A549 (cell line): ENCODE measurements at regions of chr3 and their contacts with region 1.

Region 1: DNA sequence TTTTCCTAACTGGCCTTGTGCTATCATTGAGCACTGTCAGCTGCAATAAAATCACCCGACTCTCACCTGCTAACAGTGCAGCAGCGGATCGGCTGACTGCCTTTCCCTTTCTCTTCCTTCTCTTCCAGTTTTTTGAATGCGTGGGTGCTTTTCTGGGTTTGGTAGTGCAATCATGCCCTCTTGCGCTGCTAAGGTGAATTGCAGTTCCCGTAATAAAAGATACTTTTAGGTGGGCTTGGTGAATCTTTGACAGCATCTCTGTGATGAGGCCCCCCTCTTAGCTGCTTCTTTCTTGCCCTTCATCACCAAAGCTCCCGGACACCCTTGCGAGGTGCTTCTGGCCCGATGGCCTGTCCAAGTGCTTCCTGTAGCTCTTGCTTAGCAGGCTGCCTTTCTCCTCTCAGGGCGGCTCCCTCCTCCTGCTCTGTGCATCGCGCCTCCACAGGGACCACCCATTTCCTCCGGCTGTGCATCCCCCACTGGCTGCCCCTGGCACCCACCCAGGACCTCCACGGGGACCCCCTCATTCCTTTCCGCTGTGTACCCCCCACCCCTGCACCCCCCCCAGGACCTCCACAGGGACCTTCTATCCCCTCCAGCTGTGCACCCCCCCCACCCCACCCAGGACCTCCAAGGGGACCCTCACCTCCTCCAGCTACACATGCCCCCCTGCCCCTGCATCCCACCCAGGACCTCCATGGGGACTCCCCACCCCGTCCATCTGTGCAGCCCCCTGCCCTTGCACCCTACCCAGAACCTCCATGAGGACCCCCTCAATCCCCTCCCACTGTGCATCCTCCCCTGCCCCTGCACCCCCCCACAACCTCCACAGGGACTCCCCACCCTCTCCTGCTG is 50.8 kb upstream of the RPL32 start:
- DNase-seq: peak; percentile 55 to 62
- ATAC-seq: peak in 1 of 2 experiments; percentile 58; a peak in 3 of 6 replicates
- H3K4me3 ChIP-seq: no peak overlapping the region
- H3K27ac ChIP-seq: no peak overlapping the region
- H3K4me1 ChIP-seq: no peaks in the 10 kb centered on the region
- CTCF ChIP-seq: peak; percentile 86
- EP300 ChIP-seq: no peak
- POLR2A ChIP-seq: no peak
- RAD21 ChIP-seq: peak; percentile 92 to 96

Region 2: GRCh38 chr3:12135029-12135657 is 757.1 kb before region 1 on chr3:
- CTCF ChIA-PET with region 1: interaction called, 11 read pairs
- POLR2A ChIA-PET with region 1: no interaction called
- DNase-seq: peak; percentile 64 to 66
- ATAC-seq: peak; percentile 96
- H3K4me3 ChIP-seq: no peak overlapping the region
- H3K27ac ChIP-seq: peak overlapping the region; percentile 0 to 39; a peak in 3 of 6 replicates
- H3K4me1 ChIP-seq: no peaks in the 10 kb centered on the region
- CTCF ChIP-seq: peak; percentile 95
- EP300 ChIP-seq: no peak
- POLR2A ChIP-seq: no peak
- RAD21 ChIP-seq: peak; percentile 98

Region 3: DNA sequence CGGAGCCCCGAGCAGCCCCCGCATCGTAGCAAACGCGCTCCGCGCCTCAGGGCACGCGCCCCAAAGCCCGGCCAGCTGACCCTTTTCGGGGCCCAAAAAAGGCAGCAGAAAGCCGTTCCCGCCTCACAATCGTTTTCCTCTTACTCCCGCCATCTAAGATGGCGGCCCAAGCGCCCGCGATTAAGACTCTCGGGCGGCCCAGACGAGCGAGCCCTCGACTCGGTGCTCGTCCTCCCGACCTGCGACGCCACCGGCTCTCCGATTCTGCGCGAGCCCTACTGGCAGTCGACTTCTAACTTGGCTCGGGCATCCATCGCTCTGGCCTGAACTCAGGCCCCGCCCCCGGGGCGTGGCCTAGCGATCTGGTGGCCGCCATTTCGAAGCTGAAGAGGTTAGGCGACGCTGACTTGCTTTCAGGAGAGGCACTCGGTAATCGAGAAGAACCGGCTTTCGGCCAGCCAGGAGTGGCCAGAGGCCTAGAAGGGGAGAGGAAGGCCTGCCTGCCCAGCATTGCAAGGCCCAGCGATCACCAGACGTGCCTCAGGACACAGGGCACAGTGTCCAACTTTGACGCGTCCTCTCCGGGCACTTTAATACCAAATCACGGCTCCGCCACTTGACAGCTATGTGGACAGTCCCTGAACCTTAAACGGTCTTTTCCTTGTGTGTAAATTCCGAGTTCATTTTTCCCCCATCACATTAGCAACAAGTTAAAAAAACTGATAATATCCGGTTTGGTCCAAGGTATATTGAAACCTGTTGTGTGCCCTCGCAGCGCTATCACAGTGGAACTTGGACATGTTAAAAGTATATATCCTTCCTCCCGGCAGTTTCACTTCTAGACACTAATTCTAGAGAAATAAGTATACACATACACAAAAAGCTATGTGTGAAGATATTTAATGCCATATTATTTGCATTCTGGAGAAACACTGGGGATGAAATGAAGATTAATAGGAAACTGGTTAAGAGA is 228.0 kb before region 1 on chr3 and contains the start of gene RAF1:
- CTCF ChIA-PET with region 1: no interaction called
- POLR2A ChIA-PET with region 1: no interaction called
- DNase-seq: peak; percentile 92 to 98
- ATAC-seq: peak; percentile 90 to 96
- H3K4me3 ChIP-seq: peak within 1 kb of the TSS; percentile 85
- H3K27ac ChIP-seq: peak within 1 kb of the TSS; percentile 97 to 98
- H3K4me1 ChIP-seq: peaks cover 22% of the 10 kb centered on the region; the same call in 2 of the 3 replicates
- CTCF ChIP-seq: no peak
- EP300 ChIP-seq: no peak
- POLR2A ChIP-seq: peak; percentile 78
- RAD21 ChIP-seq: peak in 1 of 2 experiments; percentile 25; a peak in 1 of 5 replicates
- polyA plus RNA-seq, gene RAF1: 94.6 and 109 TPM in 2 replicates

Region 4: GRCh38 chr3:12830785-12831156 is 61.4 kb before region 1 on chr3:
- CTCF ChIA-PET with region 1: interaction called, 15 read pairs
- POLR2A ChIA-PET with region 1: no interaction called
- DNase-seq: no peak
- ATAC-seq: peak; percentile 23 to 39; a peak in 5 of 6 replicates
- H3K4me3 ChIP-seq: no peak overlapping the region
- H3K27ac ChIP-seq: no peak overlapping the region; a peak in 1 of 6 replicates
- H3K4me1 ChIP-seq: peaks cover 24% of the 10 kb centered on the region
- CTCF ChIP-seq: no peak
- EP300 ChIP-seq: no peak
- POLR2A ChIP-seq: no peak
- RAD21 ChIP-seq: no peak

Region 5: DNA sequence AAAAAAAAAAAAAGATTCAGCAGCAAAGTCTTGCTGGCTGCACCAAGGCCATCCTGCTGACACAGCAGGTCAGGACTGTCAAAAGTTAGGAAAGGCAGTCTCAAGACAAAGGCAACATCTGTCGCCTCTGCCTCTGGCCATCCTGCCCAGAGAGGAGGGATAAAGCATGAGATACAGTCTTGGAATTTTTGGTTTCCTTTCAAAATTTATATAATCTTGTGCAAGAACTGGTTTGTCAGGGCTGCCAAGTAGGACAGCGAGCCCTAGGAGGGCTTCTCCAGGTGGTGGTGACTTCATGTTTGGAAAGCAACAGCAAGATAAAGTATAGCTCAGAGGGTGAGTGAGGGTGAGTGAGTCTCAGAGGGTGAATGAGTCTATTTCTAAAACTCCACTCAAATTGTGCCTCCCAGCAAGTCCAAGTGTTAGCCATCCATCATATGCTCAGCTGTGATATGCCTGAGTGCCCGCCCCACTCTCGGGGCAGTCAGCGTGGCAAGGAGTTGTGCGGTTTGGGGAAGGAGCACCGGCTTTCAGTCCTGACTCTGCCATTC is 38.9 kb before region 1 on chr3:
- CTCF ChIA-PET with region 1: interaction called, 11 read pairs
- POLR2A ChIA-PET with region 1: no interaction called
- DNase-seq: no peak
- ATAC-seq: no peak
- H3K4me3 ChIP-seq: no peak overlapping the region
- H3K27ac ChIP-seq: no peak overlapping the region
- H3K4me1 ChIP-seq: no peaks in the 10 kb centered on the region
- CTCF ChIP-seq: no peak
- EP300 ChIP-seq: no peak
- POLR2A ChIP-seq: no peak
- RAD21 ChIP-seq: no peak

Region 6: GRCh38 chr3:12868039-12869034 is 23.9 kb before region 1 on chr3:
- CTCF ChIA-PET with region 1: interaction called, 90 read pairs
- POLR2A ChIA-PET with region 1: no interaction called
- DNase-seq: peak; percentile 85 to 88
- ATAC-seq: peak; percentile 95 to 97
- H3K4me3 ChIP-seq: no peak overlapping the region
- H3K27ac ChIP-seq: no peak overlapping the region
- H3K4me1 ChIP-seq: peaks cover 4% of the 10 kb centered on the region; the same call in 2 of the 3 replicates
- CTCF ChIP-seq: peak; percentile 87
- EP300 ChIP-seq: no peak
- POLR2A ChIP-seq: no peak
- RAD21 ChIP-seq: peak; percentile 80 to 87

Region 7: DNA sequence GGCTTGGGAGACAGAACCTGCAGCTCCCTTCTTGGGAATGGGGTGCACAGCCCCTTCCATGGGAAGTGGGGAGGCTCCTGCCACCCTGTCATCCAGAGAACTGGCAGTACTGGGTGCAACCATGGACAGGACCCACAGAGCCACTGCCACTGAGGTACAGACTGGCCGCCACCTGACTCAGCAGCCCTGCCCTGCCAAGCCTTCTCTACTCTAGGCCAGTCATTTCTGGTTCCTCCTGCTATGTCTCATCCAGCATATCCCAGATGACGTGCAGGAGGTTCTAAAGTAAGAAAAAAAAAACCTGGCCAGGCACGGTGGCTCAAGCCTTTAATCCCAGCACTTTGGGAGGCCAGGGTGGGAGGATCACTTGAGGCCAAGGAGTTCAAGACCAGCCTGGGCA is 26.0 kb after region 1 on chr3:
- CTCF ChIA-PET with region 1: interaction called, 10 read pairs
- POLR2A ChIA-PET with region 1: no interaction called
- DNase-seq: no peak
- ATAC-seq: no peak
- H3K4me3 ChIP-seq: no peak overlapping the region
- H3K27ac ChIP-seq: no peak overlapping the region
- H3K4me1 ChIP-seq: no peaks in the 10 kb centered on the region
- CTCF ChIP-seq: no peak
- EP300 ChIP-seq: no peak
- POLR2A ChIP-seq: no peak
- RAD21 ChIP-seq: no peak

Region 8: DNA sequence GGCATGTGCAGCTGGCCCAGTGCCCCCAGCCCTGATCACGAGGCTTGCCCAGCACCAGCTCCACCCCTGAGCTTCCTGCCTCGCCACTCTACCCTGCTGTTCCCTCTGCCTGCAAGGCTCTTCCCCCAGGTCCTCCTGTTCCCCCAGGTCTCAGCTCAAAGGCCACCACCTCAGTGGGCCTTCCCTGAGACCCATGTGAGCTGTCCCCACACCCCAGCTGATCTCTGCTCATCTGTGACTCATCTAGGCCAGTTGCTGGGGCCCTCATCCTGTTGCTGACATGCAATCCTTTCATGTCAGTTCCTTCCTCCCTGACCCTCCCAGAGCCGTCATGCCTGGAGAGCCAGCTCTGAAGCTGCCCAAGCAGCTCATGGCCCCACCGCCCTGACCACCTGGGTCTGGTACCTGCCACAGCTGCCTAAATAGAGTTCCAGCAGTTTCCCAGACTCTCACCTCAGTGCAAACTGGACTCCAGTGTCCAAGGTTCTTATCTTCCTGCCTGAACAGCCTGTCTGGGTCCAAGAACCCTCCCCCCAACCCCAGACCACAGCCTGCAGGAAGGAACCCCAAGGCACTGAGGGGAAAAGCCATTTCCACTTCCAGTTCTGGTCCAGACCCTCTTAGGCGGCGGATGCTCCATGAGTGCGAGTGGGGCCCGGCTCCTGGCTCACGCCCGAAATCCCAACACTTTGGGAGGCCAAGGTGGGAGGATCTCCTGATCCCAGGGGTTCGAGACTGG is 297.6 kb after region 1 on chr3:
- CTCF ChIA-PET with region 1: no interaction called
- POLR2A ChIA-PET with region 1: no interaction called
- DNase-seq: no peak
- ATAC-seq: no peak
- H3K4me3 ChIP-seq: no peak overlapping the region
- H3K27ac ChIP-seq: no peak overlapping the region
- H3K4me1 ChIP-seq: no peaks in the 10 kb centered on the region
- CTCF ChIP-seq: no peak
- EP300 ChIP-seq: no peak
- POLR2A ChIP-seq: no peak
- RAD21 ChIP-seq: no peak